ENCODE measurements at regions of chr4 and their contacts with region 1.

Region 1: GRCh38 chr4:128287871-128288688 is 467 bp upstream of the PGRMC2 start:
- DNase-seq: peak; percentile 94
- ATAC-seq: peak; percentile 90
- H3K4me3 ChIP-seq: peak overlapping the region; percentile 74 to 80
- H3K27ac ChIP-seq: peak overlapping the region; percentile 63
- H3K4me1 ChIP-seq: peaks cover 10 to 19% of the 10 kb centered on the region in 2 experiments; a peak in 3 of 4 replicates
- H3K27me3 ChIP-seq: no peaks in the 10 kb centered on the region
- CTCF ChIP-seq: 0 out of 6 replicates have a peak, but pooled peaks of 1 of the 3 experiments have one; percentile 1
- POLR2A ChIP-seq: no peak
- RAD21 ChIP-seq: no peak

Region 2: DNA sequence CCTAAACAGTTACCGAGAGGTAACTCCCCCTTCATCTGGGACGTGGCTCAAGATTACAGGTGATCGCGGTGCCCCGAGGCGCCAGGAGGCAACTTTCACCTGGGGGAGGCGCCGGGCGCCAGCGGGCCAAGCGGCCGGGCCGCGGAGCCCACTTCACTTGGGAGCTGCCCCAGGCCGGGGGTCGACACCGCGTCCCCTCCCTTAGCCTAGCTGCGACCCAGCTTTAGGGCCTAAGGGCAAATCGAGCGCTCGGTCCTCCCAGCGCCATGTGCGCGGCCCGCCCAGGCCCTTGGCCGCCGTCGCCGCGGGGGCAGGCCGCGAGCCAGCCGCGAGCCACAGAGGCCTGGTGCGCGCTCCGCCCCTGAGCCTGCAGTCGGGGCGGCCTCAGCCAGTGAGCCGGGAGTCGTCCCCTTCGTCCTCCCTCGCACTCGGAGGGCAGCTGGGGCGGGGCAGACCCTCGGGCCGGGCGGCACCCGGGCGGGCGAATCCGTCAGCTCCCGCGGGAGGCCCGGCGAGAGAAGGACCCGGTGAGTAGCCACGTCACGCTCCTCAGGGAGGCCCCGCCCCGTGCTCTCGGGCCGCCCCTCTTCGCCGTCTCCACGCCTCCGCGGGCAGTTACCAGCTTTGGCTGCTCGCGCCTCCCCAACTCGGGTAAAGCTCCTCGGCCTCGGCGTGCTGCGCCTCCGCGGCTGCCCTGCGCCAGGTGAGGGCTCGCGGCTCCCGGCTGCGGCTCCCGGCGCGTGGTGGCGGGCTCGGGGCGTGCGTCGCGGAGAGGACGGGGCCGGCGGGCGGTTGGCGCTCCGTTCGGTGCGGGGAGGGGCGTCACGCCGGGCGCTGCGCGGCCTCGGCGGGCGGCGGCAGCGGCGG is 227.1 kb before region 1 on chr4 and contains the start of gene LARP1B:
- CTCF ChIA-PET with region 1: no interaction called
- POLR2A ChIA-PET with region 1: no interaction called
- RAD21 ChIA-PET with region 1: no interaction called
- intact Hi-C with region 1: loop called (anchors 10 kb)
- DNase-seq: peak; percentile 87
- ATAC-seq: peak; percentile 88
- H3K4me3 ChIP-seq: peak within 1 kb of the TSS; percentile 71 to 77
- H3K27ac ChIP-seq: peak within 1 kb of the TSS; percentile 92
- H3K4me1 ChIP-seq: peaks cover 9 to 20% of the 10 kb centered on the region in 2 experiments; a peak in 3 of 4 replicates
- H3K27me3 ChIP-seq: no peaks in the 10 kb centered on the region
- CTCF ChIP-seq: no peak
- POLR2A ChIP-seq: peak; percentile 83
- RAD21 ChIP-seq: no peak
- total RNA-seq, gene LARP1B: 31.1 TPM

Region 3: DNA sequence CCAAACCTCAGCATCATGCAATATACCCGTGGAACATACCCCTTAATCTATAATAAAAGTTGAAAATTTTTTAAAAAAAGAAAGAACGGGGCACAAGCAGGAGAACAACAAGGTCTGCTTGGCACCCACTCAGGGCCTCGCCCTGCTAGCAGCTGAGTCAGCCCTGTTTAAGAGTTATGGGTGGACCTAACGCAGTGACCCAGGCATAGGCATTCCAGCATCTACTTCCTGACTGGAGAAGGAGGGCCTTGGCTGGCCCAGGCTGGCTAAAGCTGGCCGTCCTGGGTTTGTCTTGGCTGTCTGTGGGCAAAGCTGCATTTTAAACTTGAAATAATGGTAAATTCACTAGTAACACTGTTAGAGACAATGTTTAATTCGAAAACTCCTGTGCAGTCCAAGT is 236.2 kb after region 1 on chr4:
- CTCF ChIA-PET with region 1: no interaction called
- POLR2A ChIA-PET with region 1: no interaction called
- RAD21 ChIA-PET with region 1: no interaction called
- intact Hi-C with region 1: loop called (anchors 5 kb)
- DNase-seq: peak; percentile 53
- ATAC-seq: peak; percentile 79
- H3K4me3 ChIP-seq: 0 out of 4 replicates have a peak overlapping the region, but pooled peaks of 1 of the 2 experiments have one; percentile 1
- H3K27ac ChIP-seq: no peak overlapping the region
- H3K4me1 ChIP-seq: peaks cover 30 to 58% of the 10 kb centered on the region in 2 experiments
- H3K27me3 ChIP-seq: no peaks in the 10 kb centered on the region
- CTCF ChIP-seq: no peak
- POLR2A ChIP-seq: no peak
- RAD21 ChIP-seq: no peak

Region 4: DNA sequence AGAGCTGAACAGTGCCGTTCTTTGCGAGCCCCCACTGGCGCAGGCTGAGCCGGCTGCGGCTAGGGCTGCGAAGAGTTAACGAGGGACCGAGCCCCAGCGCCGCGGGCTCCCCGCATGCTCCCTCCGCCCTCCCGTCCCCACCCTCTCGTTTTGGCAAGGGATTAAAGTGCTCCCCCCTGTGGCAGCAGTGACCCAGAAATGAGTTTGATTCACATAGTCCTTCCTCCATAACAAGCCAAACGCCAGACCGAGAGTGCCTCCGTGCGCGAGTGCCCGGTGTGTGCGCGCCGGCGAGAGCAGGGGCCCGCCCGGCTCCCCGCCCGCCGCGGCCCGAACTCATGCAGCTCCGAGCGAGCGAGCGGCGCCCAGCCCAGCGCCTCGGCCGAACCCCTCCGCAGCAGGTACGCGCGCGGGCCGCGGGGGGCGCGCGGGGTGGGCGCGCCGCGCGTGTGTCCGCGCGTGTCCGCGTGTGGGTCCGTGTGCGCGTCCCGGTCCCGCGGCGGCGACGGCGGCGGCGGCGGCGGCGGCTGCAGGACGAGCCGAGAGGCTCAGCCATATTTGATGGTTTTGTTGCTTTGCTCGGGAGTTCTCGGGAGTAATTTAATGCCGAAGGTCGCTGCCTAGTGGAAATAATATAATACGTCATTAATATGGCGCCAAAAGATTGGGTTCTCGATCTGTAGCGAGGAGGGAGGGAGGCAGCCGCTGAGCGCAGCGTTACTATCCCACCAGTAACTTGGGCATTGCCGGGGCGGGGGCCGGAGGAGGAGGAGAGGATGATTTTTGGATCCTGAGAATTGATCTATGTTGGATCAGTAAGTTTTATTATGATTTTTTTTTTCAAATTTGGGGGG is 521.6 kb after region 1 on chr4 and contains the start of gene JADE1:
- CTCF ChIA-PET with region 1: no interaction called
- POLR2A ChIA-PET with region 1: no interaction called
- RAD21 ChIA-PET with region 1: no interaction called
- intact Hi-C with region 1: loop called (anchors 5 kb)
- DNase-seq: peak; percentile 90
- ATAC-seq: peak; percentile 67
- H3K4me3 ChIP-seq: peak within 1 kb of the TSS; percentile 84 to 92
- H3K27ac ChIP-seq: peak within 1 kb of the TSS; percentile 91
- H3K4me1 ChIP-seq: peaks cover 10 to 27% of the 10 kb centered on the region in 2 experiments; a peak in 3 of 4 replicates
- H3K27me3 ChIP-seq: no peaks in the 10 kb centered on the region
- CTCF ChIP-seq: peak; percentile 49 to 89 (median 57)
- POLR2A ChIP-seq: peak; percentile 56
- RAD21 ChIP-seq: peak; percentile 81
- total RNA-seq, gene JADE1: 26.5 TPM

Region 5: DNA sequence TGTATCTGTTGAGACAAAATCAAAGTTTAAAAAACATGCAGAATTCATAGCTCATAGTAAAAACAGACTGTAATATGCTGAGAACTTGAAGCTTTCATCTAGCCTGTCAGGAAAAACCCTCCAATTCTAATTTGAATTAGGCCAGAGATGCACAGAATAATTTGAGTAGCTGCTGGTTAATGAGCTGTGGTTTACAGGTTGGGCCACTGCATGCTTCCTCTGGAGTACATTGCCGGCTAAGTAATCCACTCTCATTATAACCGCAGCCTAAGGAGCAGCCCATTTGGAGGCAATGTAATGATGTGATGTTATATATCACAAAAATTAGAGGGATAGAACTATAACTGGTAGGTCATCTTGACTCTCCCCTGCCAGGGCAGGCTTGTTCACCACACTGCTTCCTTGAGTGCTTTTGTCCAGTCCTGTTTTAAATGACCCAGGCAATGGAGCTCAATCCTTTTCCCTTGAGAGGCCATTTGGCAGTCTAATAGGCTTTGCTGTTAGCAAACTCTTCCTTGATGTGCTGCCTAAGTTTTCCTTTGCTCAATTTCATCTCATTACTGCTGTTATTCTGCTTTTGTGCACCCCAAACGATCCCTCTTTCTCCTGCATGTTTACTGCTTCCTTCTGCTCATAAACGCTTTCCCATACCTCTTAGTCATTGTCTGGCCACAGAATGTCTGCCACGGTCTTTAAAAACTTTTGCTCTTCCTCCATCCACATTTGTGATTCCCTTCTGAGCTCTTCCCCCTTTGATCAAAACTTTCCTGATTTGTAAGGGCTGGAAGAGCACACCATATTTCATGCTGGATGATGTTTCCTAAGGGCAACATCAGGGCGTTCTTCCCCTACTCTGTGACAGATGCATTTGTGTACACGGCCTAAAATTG is 1038.7 kb after region 1 on chr4:
- CTCF ChIA-PET with region 1: no interaction called
- POLR2A ChIA-PET with region 1: no interaction called
- RAD21 ChIA-PET with region 1: no interaction called
- intact Hi-C with region 1: no loop called
- DNase-seq: no peak
- ATAC-seq: no peak
- H3K4me3 ChIP-seq: no peak overlapping the region
- H3K27ac ChIP-seq: no peak overlapping the region
- H3K4me1 ChIP-seq: no peaks in the 10 kb centered on the region
- H3K27me3 ChIP-seq: no peaks in the 10 kb centered on the region
- CTCF ChIP-seq: no peak
- POLR2A ChIP-seq: no peak
- RAD21 ChIP-seq: no peak